ENCODE measurements at regions of chr5 and their contacts with region 1.

Region 1: DNA sequence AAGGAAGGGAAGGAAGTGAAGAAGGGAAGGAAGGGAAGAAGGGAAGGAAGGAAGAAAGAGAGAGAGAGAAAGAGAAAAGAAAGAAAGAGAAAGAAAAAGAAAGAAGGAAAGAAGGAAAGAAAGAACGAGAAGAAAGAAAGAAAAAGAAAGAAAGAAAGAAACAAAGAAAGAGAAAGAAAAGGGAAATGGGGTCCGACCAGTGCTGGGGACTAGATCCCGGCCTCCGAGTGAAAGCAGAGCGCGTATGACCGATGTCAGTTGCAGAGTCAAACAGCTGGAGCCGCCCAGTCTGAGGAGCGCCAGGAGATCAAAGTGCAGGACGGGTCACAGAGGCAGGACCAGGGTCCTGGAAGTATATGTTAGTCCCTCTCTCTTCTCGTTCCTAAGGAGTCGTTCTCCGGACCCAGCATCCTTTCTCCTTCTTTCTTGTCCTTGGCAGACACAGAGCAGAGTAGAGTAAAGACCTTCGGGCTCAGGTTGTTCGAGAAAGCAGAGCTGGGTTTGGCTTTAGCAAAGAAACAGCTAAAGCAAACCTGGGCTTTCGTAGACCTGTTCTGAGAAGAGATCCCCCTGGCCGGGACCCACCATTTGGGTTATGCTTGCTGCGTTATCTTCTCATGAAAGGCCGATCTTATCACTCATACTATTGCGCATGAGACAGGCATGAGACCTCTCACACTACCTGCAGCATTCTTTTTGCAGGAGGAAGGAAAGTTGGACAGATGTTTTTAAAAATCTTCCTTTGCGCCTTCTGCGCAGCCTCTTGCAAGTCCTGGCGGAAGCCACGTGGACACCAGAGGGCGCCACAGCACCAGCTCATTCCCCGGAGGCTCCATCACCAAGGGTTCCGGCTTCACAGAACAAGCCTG is 305.2 kb upstream of the MSX2 start:
- DNase-seq: peak; percentile 93 to 94
- H3K4me3 ChIP-seq: peak overlapping the region; percentile 30
- H3K4me3 Mint-ChIP-seq: peak overlapping the region; percentile 75
- H3K27ac Mint-ChIP-seq: peak overlapping the region; percentile 54
- H3K4me1 ChIP-seq: peaks cover 5% of the 10 kb centered on the region
- H3K4me1 Mint-ChIP-seq: peaks cover 22% of the 10 kb centered on the region
- H3K27me3 ChIP-seq: no peaks in the 10 kb centered on the region
- H3K27me3 Mint-ChIP-seq: no peaks in the 10 kb centered on the region
- CTCF ChIP-seq: peak; percentile 94 to 97

Region 2: GRCh38 chr5:174020397-174021296 is 398.5 kb before region 1 on chr5:
- CTCF ChIA-PET with region 1: no interaction called
- POLR2A ChIA-PET with region 1: no interaction called
- intact Hi-C with region 1: loop called (anchors 10 kb)
- DNase-seq: peak; percentile 64 to 66
- H3K4me3 ChIP-seq: peak overlapping the region; percentile 40
- H3K4me3 Mint-ChIP-seq: peak overlapping the region; percentile 88
- H3K27ac Mint-ChIP-seq: peak overlapping the region; percentile 63
- H3K4me1 ChIP-seq: 0 out of 2 replicates have a peak, but pooled peaks cover 4% of the 10 kb centered on the region
- H3K4me1 Mint-ChIP-seq: peaks cover 7% of the 10 kb centered on the region
- H3K27me3 ChIP-seq: peaks cover 1% of the 10 kb centered on the region; the same call in 1 of the 2 replicates
- H3K27me3 Mint-ChIP-seq: peaks cover 19% of the 10 kb centered on the region
- CTCF ChIP-seq: peak; percentile 53 to 88

Region 3: DNA sequence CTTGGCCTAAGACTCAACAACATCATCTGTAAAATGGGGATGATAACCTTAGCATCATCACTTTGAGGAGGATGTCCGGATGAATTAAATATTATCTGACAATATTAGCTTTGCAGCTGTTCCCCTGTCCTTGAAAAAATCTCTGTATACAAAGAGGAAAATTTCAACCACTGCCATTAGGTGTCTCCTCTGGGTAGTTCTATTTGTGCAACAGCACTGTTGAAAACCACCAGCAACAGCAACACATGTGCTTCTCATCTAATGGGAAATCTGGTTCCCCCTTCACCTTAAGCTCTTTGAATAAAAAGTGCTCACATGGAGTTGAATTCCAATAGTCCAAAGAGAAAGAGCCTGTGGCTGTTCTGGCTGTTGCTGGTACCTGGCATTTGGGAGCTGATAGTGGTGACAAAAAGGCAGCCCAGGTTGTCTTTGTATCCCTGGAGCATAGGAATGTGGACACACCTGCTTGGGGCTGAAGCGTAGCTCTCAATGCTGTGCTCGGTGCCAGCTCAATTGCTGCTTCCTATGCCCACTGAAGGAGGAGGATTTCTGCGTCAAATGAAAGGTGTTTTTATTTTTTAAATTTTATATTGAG is 16.8 kb before region 1 on chr5:
- CTCF ChIA-PET with region 1: interaction called, 11 read pairs
- POLR2A ChIA-PET with region 1: no interaction called
- intact Hi-C with region 1: no loop called
- DNase-seq: peak in 1 of 2 experiments; percentile 24
- H3K4me3 ChIP-seq: no peak overlapping the region
- H3K4me3 Mint-ChIP-seq: no peak overlapping the region
- H3K27ac Mint-ChIP-seq: no peak overlapping the region
- H3K4me1 ChIP-seq: no peaks in the 10 kb centered on the region
- H3K4me1 Mint-ChIP-seq: peaks cover 7% of the 10 kb centered on the region
- H3K27me3 ChIP-seq: no peaks in the 10 kb centered on the region; the same call in 1 of the 2 replicates
- H3K27me3 Mint-ChIP-seq: peaks cover 27% of the 10 kb centered on the region
- CTCF ChIP-seq: peak in 1 of 2 experiments; percentile 24

Region 4: DNA sequence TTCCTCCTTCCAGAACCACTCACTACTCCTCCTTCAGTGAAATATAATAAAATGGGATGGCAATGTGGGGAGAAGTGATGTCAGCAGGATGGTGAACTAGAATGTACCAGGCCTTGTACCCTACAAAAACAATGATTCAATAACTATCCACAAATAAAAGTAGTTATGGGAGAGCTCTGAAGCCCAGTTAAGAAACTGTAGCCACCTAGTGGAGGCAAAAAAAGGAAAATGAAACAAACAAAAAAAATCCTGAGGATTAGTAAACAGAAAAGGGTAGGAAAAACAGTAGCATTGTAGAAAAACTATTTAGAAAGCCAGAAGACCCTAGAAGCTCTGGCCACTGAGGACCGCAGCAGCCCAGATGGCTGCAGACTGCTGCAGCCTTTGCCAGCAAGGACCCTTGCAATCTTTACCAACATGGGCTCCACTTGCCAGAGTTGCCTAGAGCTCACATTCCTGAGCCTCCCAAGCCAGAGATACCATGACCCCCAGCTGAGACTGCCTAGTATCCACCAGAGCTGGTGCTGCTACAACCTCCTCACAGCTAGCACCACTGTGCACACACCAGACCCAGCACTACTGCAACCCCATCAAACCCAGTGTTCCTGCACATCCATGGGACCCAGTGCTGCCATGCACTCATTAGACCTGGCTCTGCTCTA is 45.5 kb after region 1 on chr5:
- CTCF ChIA-PET with region 1: interaction called, 18 read pairs
- POLR2A ChIA-PET with region 1: no interaction called
- intact Hi-C with region 1: loop called (anchors 1 kb)
- DNase-seq: no peak
- H3K4me3 ChIP-seq: no peak overlapping the region
- H3K4me3 Mint-ChIP-seq: no peak overlapping the region
- H3K27ac Mint-ChIP-seq: no peak overlapping the region
- H3K4me1 ChIP-seq: peaks cover 44% of the 10 kb centered on the region
- H3K4me1 Mint-ChIP-seq: peaks cover 35% of the 10 kb centered on the region
- H3K27me3 ChIP-seq: no peaks in the 10 kb centered on the region
- H3K27me3 Mint-ChIP-seq: no peaks in the 10 kb centered on the region
- CTCF ChIP-seq: peak; percentile 32 to 51

Region 5: DNA sequence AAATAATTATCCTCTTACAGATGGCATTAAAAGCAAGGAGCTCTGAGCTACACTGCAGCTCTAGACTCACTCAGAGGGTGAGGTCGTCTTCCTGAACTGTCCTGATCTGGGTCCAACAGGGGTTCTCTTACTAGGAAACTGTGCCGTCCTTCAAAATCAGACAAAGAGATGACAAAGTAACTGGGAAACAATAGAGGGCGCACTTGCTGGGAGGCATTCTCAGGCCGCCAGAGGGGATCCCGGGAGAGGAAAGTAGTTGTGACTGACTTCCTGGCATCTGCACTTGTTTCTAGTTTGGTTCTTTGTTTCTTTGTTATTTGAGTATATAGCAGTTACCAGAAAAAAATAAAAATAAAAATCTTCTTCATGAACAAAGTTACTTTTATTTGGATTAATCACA is 162.3 kb after region 1 on chr5:
- CTCF ChIA-PET with region 1: no interaction called
- POLR2A ChIA-PET with region 1: no interaction called
- intact Hi-C with region 1: loop called (anchors 1 kb)
- DNase-seq: peak; percentile 61 to 72
- H3K4me3 ChIP-seq: no peak overlapping the region
- H3K4me3 Mint-ChIP-seq: no peak overlapping the region
- H3K27ac Mint-ChIP-seq: no peak overlapping the region
- H3K4me1 ChIP-seq: peaks cover 9% of the 10 kb centered on the region; the same call in 1 of the 2 replicates
- H3K4me1 Mint-ChIP-seq: peaks cover 16% of the 10 kb centered on the region
- H3K27me3 ChIP-seq: no peaks in the 10 kb centered on the region
- H3K27me3 Mint-ChIP-seq: no peaks in the 10 kb centered on the region
- CTCF ChIP-seq: peak; percentile 68 to 70

Region 6: DNA sequence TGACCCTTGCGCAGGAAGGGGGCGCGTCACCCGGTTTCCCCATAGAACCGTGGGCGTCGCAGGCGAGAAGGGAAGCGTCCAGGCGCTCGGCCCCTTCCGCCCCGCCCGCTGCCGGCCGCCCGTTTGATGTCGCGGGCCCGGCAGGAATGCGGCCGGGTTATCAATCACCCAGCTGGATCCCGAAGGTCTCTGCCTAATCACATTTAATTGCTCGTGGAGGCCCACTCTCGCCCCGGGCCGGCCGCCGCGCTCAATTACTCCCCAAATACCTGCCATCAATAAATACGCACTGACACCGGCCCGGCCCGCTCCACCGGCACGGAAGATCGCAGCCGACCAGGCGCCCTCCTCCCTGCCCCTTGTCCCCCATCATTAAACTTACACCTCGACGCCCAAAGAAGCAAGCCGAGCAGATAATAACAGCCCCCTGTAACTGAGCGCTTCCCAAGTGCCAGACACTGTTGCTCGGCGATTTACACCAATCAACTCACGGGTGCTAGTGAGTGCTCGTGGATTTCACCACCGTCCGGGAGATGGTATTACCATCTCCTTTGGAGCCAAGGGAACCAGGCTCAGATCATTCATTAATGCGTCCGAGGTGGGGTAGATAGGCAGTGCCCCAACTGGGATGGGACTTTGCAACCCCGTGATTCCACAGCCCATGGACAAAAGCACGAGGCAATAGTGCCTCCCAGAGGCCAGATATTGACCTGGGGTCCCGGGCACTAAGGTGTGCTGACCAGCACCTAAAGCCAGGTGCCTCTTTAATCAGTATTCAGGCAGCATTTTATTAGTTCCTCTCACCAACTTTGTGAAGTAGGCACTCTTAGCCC is 316.6 kb after region 1 on chr5:
- CTCF ChIA-PET with region 1: interaction called, 37 read pairs
- POLR2A ChIA-PET with region 1: no interaction called
- intact Hi-C with region 1: loop called (anchors 1 kb)
- DNase-seq: peak; percentile 87 to 90
- H3K4me3 ChIP-seq: peak overlapping the region; percentile 50
- H3K4me3 Mint-ChIP-seq: peak overlapping the region; percentile 86
- H3K27ac Mint-ChIP-seq: peak overlapping the region; percentile 52
- H3K4me1 ChIP-seq: peaks cover 36% of the 10 kb centered on the region
- H3K4me1 Mint-ChIP-seq: peaks cover 24% of the 10 kb centered on the region
- H3K27me3 ChIP-seq: no peaks in the 10 kb centered on the region
- H3K27me3 Mint-ChIP-seq: no peaks in the 10 kb centered on the region
- CTCF ChIP-seq: peak; percentile 74 to 90

Region 7: DNA sequence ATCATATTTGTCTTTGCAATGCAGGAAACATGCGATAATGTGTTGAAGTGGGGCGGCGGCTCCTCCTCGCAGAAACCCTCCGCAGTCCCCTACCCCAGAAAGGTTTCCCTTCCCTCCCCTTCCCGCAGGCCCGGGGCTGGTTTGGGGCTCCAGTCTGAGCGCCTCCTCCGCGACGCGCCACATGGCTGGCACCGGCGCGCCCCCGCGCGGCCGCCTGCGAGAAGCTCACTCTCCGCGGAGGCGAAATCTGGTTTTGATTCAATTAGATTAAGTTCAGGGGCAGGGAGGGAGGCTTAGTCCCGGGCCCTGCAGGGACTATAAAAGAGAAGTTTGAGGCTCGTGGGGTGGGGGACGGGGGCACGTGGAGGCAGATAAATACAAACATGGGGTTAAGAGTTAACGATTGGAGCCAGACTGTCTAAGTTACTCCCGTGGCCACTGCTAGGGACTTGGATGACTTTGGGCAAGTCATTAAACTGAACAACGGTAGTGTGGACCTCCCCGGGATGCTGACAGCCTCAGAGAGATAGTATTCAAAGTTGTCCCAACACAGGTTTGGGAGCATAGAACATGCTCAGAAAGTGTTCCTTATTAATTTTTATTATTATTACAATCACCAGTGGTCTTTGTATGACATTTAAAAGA is 374.6 kb after region 1 on chr5:
- CTCF ChIA-PET with region 1: interaction called, 30 read pairs
- POLR2A ChIA-PET with region 1: no interaction called
- intact Hi-C with region 1: loop called (anchors 1 kb)
- DNase-seq: peak; percentile 61 to 81
- H3K4me3 ChIP-seq: no peak overlapping the region
- H3K4me3 Mint-ChIP-seq: peak overlapping the region; percentile 13
- H3K27ac Mint-ChIP-seq: no peak overlapping the region
- H3K4me1 ChIP-seq: no peaks in the 10 kb centered on the region
- H3K4me1 Mint-ChIP-seq: peaks cover 7% of the 10 kb centered on the region
- H3K27me3 ChIP-seq: no peaks in the 10 kb centered on the region
- H3K27me3 Mint-ChIP-seq: no peaks in the 10 kb centered on the region
- CTCF ChIP-seq: peak; percentile 97 to 98